ENCODE measurements at regions of chr2 and their contacts with region 1.

Region 1: GRCh38 chr2:105114551-105114950 is 76.7 kb downstream of the MRPS9 start:
- DNase-seq: peak; percentile 67
- ATAC-seq: peak; percentile 51
- H3K4me3 ChIP-seq: no peak overlapping the region
- H3K27ac ChIP-seq: no peak overlapping the region
- H3K4me1 ChIP-seq: no peaks in the 10 kb centered on the region
- H3K27me3 ChIP-seq: no peaks in the 10 kb centered on the region
- CTCF ChIP-seq: peak; percentile 82

Region 2: GRCh38 chr2:105179469-105180372 is 65.2 kb after region 1 on chr2:
- CTCF ChIA-PET with region 1: interaction called, 3 read pairs
- POLR2A ChIA-PET with region 1: no interaction called
- intact Hi-C with region 1: loop called (anchors 1 kb)
- DNase-seq: peak; percentile 94
- ATAC-seq: peak; percentile 63
- H3K4me3 ChIP-seq: no peak overlapping the region
- H3K27ac ChIP-seq: no peak overlapping the region
- H3K4me1 ChIP-seq: peaks cover 11% of the 10 kb centered on the region
- H3K27me3 ChIP-seq: peaks cover 23% of the 10 kb centered on the region
- CTCF ChIP-seq: peak; percentile 83

Region 3: DNA sequence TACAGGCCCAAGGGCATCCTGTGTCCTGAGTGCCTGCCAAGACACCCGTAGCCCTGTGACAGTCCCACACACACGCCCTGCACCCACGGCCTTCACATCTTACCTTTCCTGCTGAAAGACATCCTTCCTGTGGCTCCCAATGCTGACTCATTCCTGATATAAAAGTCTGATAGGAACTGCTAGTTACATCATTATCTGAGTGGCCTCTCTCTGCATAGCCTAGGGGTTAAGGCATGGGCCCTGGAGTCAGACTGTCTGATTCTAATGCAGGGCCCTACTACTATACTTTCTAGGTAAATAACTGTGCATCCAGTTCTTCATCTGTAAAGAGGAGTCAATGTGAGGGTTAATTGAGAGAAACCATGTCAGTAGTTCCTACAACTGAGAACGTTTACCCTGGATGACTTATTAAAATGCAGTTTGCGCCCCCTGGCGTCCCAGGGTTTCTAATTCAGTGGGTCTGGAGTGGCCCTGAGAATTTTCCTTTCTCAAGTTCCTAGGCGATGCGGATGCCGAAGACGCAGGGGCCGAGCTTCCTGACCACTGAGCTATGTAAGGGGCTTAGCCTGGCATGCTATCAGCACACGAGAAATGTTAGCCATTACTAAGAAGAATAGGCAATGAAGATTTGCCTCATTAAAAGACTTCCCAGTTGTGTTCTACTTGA is 121.0 kb after region 1 on chr2:
- CTCF ChIA-PET with region 1: no interaction called
- POLR2A ChIA-PET with region 1: no interaction called
- intact Hi-C with region 1: loop called (anchors 1 kb)
- DNase-seq: peak; percentile 89
- ATAC-seq: peak; percentile 86
- H3K4me3 ChIP-seq: no peak overlapping the region
- H3K27ac ChIP-seq: no peak overlapping the region
- H3K4me1 ChIP-seq: no peaks in the 10 kb centered on the region
- H3K27me3 ChIP-seq: no peaks in the 10 kb centered on the region; the same call in 1 of the 2 replicates
- CTCF ChIP-seq: peak; percentile 93

Region 4: DNA sequence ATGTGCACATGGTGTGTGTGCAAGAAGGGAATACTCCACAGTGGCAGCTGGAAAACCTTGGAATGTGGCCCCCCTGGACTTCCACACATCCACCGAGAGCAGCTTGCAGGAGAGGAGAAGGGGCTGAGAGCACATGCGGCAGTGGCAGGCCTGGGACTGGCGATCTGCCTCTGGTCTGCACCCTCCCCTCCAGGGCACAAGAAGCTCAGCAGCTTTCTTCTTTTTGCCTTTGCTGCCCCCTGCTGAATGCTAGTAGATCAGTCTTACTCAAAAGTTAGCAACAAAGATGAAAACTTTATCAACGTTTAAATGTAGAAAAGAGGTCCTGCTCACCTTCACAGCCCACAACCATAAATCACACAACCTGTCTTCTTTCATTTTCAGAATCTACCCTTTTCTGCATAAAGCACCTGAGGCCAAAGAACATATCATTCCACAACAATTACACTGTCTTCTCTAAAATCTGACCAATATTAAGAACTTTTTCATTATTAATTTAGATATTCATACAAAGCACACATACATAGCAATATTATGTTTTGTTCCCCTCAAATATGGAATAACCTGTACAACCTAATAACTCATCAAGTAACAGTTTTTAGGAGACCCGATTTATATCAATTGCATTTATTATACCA is 180.4 kb after region 1 on chr2:
- CTCF ChIA-PET with region 1: no interaction called
- POLR2A ChIA-PET with region 1: no interaction called
- intact Hi-C with region 1: loop called (anchors 2 kb)
- DNase-seq: peak; percentile 67
- ATAC-seq: peak; percentile 80
- H3K4me3 ChIP-seq: no peak overlapping the region
- H3K27ac ChIP-seq: no peak overlapping the region
- H3K4me1 ChIP-seq: no peaks in the 10 kb centered on the region
- H3K27me3 ChIP-seq: no peaks in the 10 kb centered on the region
- CTCF ChIP-seq: peak; percentile 75